ENCODE measurements at regions of chr5 and their contacts with region 1.

Region 1: GRCh38 chr5:141326088-141326854 is 4.0 kb upstream of the PCDHGA1 start:
- DNase-seq: peak; percentile 76
- ATAC-seq: peak; percentile 91
- H3K4me3 Mint-ChIP-seq: peak overlapping the region; percentile 90
- H3K27ac Mint-ChIP-seq: peak overlapping the region; percentile 98
- H3K4me1 Mint-ChIP-seq: peaks cover 7% of the 10 kb centered on the region
- H3K27me3 Mint-ChIP-seq: peaks cover 12% of the 10 kb centered on the region
- CTCF ChIP-seq: peak; percentile 43; the same call in 1 of the 2 replicates

Region 2: GRCh38 chr5:141121563-141121962 is 204.7 kb before region 1 on chr5 and contains the start of gene PCDHB4:
- CTCF ChIA-PET with region 1: no interaction called
- POLR2A ChIA-PET with region 1: no interaction called
- DNase-seq: peak; percentile 69
- ATAC-seq: peak; percentile 73
- H3K4me3 Mint-ChIP-seq: peak within 1 kb of the TSS; percentile 51
- H3K27ac Mint-ChIP-seq: no peak within 1 kb of the TSS
- H3K4me1 Mint-ChIP-seq: no peaks in the 10 kb centered on the region
- H3K27me3 Mint-ChIP-seq: no peaks in the 10 kb centered on the region
- CTCF ChIP-seq: peak; percentile 79
- total RNA-seq, gene PCDHB4: 2.3 to 2.6 TPM (median 2.3 TPM) in 3 replicates

Region 3: DNA sequence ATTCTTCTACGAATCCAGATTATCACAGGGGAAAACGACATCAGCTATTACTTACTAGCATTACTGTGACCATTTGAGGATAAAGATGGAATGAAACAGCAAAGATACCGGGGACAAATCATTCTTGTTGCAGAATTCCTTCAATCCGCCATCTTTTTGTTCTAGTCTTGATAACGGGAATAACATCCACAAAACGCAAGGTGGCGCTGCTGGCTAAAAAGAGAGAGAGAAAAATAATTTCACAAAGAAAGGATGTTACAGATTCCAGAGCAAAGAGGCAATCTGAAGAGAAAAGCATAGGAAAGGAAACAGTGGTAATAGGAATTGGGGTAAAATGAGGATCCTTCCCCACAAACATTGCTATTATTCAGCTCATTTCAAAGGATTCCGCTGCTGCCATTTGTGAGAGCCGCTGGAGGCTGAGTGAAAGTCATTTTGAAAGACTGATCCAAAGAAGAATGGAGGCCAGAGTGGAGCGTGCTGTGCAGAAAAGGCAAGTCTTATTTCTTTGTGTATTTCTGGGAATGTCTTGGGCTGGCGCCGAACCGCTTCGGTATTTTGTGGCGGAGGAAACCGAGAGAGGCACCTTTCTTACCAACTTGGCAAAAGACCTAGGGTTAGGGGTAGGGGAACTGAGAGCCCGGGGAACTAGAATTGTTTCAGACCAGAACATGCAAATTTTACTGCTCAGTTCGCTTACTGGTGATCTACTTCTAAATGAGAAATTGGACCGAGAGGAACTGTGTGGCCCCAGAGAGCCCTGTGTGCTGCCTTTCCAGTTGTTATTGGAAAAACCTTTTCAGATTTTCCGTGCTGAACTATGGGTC is 153.7 kb before region 1 on chr5 and contains the start of gene PCDHB7:
- CTCF ChIA-PET with region 1: no interaction called
- POLR2A ChIA-PET with region 1: no interaction called
- DNase-seq: peak; percentile 57
- ATAC-seq: no peak
- H3K4me3 Mint-ChIP-seq: no peak within 1 kb of the TSS
- H3K27ac Mint-ChIP-seq: no peak within 1 kb of the TSS
- H3K4me1 Mint-ChIP-seq: no peaks in the 10 kb centered on the region
- H3K27me3 Mint-ChIP-seq: peaks cover 3% of the 10 kb centered on the region; the same call in 1 of the 2 replicates
- CTCF ChIP-seq: peak; percentile 66
- total RNA-seq, gene PCDHB7: 0.17 to 0.27 TPM (median 0.23 TPM) in 3 replicates

Region 4: GRCh38 chr5:141349917-141350619 is 23.8 kb after region 1 on chr5 and contains the start of gene PCDHGB1:
- CTCF ChIA-PET with region 1: interaction called, 15 read pairs
- POLR2A ChIA-PET with region 1: no interaction called
- DNase-seq: peak; percentile 86
- ATAC-seq: peak; percentile 96
- H3K4me3 Mint-ChIP-seq: peak within 1 kb of the TSS; percentile 72
- H3K27ac Mint-ChIP-seq: peak within 1 kb of the TSS; percentile 47; the same call in 1 of the 2 replicates
- H3K4me1 Mint-ChIP-seq: peaks cover 2% of the 10 kb centered on the region
- H3K27me3 Mint-ChIP-seq: peaks cover 3% of the 10 kb centered on the region
- CTCF ChIP-seq: peak; percentile 50
- total RNA-seq, gene PCDHGB1: 4.9 to 5.6 TPM (median 5.5 TPM) in 3 replicates

Measured in WTC11 (cell line).